Activated CD4-positive, alpha-beta memory T cell treated with anti-CD3 and anti-CD28 coated beads for 36 hours (primary cell): ENCODE measurements at regions of chr1 and their contacts with region 1.

Region 1: GRCh38 chr1:154760469-154760933 is 109.6 kb downstream of the KCNN3 start:
- DNase-seq: peak; percentile 86
- H3K4me3 Mint-ChIP-seq: peak overlapping the region; percentile 51
- H3K27ac Mint-ChIP-seq: peak overlapping the region; percentile 89
- H3K4me1 Mint-ChIP-seq: peaks cover 46% of the 10 kb centered on the region
- H3K27me3 Mint-ChIP-seq: peaks cover 2% of the 10 kb centered on the region

Region 2: GRCh38 chr1:154669464-154670282 is 90.8 kb before region 1 on chr1:
- CTCF ChIA-PET with region 1: interaction called, 36 read pairs
- POLR2A ChIA-PET with region 1: no interaction called
- intact Hi-C with region 1: no loop called
- DNase-seq: peak; percentile 86
- H3K4me3 Mint-ChIP-seq: no peak overlapping the region
- H3K27ac Mint-ChIP-seq: peak overlapping the region; percentile 24
- H3K4me1 Mint-ChIP-seq: no peaks in the 10 kb centered on the region
- H3K27me3 Mint-ChIP-seq: no peaks in the 10 kb centered on the region

Region 3: GRCh38 chr1:154736841-154737240 is 23.7 kb before region 1 on chr1:
- CTCF ChIA-PET with region 1: interaction called, 3 read pairs
- POLR2A ChIA-PET with region 1: no interaction called
- intact Hi-C with region 1: loop called (anchors 2 kb)
- DNase-seq: peak; percentile 82
- H3K4me3 Mint-ChIP-seq: no peak overlapping the region
- H3K27ac Mint-ChIP-seq: peak overlapping the region; percentile 35
- H3K4me1 Mint-ChIP-seq: peaks cover 42% of the 10 kb centered on the region
- H3K27me3 Mint-ChIP-seq: peaks cover 25% of the 10 kb centered on the region

Region 4: GRCh38 chr1:154784924-154785531 is 24.5 kb after region 1 on chr1:
- CTCF ChIA-PET with region 1: interaction called, 8 read pairs
- POLR2A ChIA-PET with region 1: interaction called, 3 read pairs
- intact Hi-C with region 1: loop called (anchors 1 kb)
- DNase-seq: peak; percentile 78
- H3K4me3 Mint-ChIP-seq: peak overlapping the region; percentile 49
- H3K27ac Mint-ChIP-seq: peak overlapping the region; percentile 86
- H3K4me1 Mint-ChIP-seq: peaks cover 31% of the 10 kb centered on the region
- H3K27me3 Mint-ChIP-seq: no peaks in the 10 kb centered on the region

Region 5: DNA sequence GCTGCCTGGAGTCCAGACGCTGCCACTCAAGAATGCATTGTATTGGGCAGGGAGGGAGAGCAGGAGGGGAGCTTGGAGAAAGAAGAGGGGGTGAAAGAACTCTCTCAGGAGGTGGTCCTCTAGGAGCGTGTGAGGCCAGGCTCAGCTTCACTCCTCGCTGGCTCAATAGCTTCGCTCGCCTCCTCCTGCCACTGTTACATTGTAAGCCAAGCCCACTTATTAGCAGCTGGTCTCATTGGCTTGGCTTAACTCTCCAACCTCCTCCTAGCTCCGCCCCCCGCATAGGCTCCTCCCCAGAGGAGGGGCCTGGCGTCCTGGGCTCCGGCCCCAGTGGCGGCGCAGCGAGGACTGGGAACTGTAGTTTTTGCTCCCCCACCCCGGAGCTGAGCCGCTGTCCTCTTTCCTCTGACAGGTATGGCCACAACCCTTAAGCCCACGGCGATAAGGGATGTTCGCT is 109.6 kb after region 1 on chr1 and contains the start of gene KCNN3:
- CTCF ChIA-PET with region 1: interaction called, 4 read pairs
- POLR2A ChIA-PET with region 1: no interaction called
- intact Hi-C with region 1: loop called (anchors 5 kb)
- DNase-seq: peak; percentile 82
- H3K4me3 Mint-ChIP-seq: no peak within 1 kb of the TSS
- H3K27ac Mint-ChIP-seq: no peak within 1 kb of the TSS
- H3K4me1 Mint-ChIP-seq: peaks cover 36% of the 10 kb centered on the region
- H3K27me3 Mint-ChIP-seq: peaks cover 44% of the 10 kb centered on the region
- total RNA-seq, gene KCNN3: 0.02 to 0.14 TPM

Region 6: GRCh38 chr1:154931940-154932487 is 171.5 kb after region 1 on chr1:
- CTCF ChIA-PET with region 1: no interaction called
- POLR2A ChIA-PET with region 1: no interaction called
- intact Hi-C with region 1: no loop called
- DNase-seq: no peak
- H3K4me3 Mint-ChIP-seq: no peak overlapping the region
- H3K27ac Mint-ChIP-seq: no peak overlapping the region
- H3K4me1 Mint-ChIP-seq: peaks cover 18% of the 10 kb centered on the region
- H3K27me3 Mint-ChIP-seq: no peaks in the 10 kb centered on the region